Endothelial cell of umbilical vein (primary cell): ENCODE measurements at regions of chr17 and their contacts with region 1.

Region 1: DNA sequence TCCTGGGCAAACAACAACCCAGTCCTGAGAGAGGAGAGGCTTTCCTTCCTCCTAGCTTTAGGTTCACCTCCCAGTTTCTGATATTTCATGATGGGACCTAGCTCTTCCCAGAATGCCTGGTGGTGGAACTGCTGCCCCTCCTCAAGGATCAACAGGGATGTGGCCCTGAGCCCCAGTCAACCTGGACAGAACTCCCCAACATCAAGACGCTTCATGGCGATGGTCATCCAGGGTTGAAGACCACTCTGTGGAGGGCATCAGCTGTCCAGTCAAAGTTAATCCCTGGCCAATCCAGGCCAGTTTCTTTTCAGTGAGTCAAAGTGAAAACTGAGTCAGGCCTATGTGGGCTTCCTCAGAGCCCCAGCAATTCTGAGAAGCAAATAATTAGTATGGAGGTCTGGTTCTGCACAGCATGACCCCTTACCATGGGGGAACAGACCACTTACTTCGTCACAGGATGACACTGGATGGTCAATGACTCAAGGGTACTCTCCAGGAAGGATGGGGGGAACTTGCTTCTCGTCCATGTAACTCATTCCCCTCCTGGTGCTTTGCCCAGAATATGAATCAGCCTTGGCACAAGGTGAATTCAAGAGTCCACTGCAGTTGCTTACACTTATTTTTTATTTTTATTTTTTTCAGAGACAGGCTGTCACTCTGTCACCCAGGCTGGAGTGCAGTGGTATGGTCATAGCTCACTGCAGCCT is 14.7 kb upstream of the XYLT2 start:
- DNase-seq: no peak
- H3K4me3 ChIP-seq: no peak overlapping the region
- H3K27ac ChIP-seq: no peak overlapping the region
- H3K4me1 ChIP-seq: no peaks in the 10 kb centered on the region
- H3K27me3 ChIP-seq: peaks cover 9 to 11% of the 10 kb centered on the region in 2 experiments
- CTCF ChIP-seq: no peak
- POLR2A ChIP-seq: no peak

Region 2: GRCh38 chr17:50394711-50395110 is 63.5 kb after region 1 on chr17:
- CTCF ChIA-PET with region 1: no interaction called
- POLR2A ChIA-PET with region 1: no interaction called
- dilution Hi-C with region 1: no loop called
- intact Hi-C with region 1: no loop called
- DNase-seq: no peak
- H3K4me3 ChIP-seq: no peak overlapping the region
- H3K27ac ChIP-seq: no peak overlapping the region
- H3K4me1 ChIP-seq: peaks cover 21% of the 10 kb centered on the region
- H3K27me3 ChIP-seq: no peaks in the 10 kb centered on the region
- CTCF ChIP-seq: no peak
- POLR2A ChIP-seq: no peak

Region 3: DNA sequence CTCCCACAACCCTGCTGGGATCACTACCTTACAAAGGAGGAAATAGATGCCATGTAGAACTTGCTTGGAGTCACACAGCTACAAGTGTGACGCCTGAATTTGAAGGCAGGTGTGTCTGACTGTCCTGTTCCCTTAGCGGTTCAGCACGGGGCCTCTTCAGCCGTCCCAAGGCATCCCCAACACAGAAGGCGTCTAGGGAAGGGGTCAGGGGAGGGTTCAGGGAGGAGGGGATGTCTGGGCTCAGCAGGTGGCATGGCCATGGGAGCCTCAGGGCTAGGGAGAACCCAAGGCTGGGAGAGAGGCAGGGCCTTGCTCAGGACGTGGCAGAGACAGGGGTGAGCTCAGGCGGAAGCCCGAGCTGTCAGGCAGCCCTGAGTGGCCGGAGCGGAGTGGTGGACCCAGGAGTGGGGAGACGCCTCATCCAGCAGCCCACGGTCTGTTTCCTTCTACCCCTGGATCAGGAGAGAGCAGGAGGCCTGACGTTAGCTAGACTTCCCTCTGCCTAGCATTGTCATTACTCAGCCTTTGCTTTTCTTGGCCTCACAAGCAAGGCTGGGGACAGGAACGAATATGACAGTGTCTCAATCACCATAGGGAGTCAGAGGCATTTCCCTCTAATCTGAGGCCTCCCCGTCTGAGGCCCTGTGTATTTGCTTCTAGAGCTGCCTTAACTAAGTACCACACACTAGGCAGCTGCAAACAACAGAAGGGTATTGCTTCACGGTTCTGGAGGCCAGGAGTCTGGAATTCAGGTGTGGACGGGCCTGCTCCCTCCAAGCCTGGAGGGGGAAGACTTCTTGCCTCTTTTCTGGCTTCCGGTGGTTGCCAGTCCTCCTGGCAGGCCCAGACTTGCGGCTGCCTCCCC is 467.4 kb after region 1 on chr17:
- CTCF ChIA-PET with region 1: no interaction called
- POLR2A ChIA-PET with region 1: interaction called, 10 read pairs
- dilution Hi-C with region 1: no loop called
- intact Hi-C with region 1: no loop called
- DNase-seq: no peak
- H3K4me3 ChIP-seq: no peak overlapping the region
- H3K27ac ChIP-seq: no peak overlapping the region
- H3K4me1 ChIP-seq: no peaks in the 10 kb centered on the region
- H3K27me3 ChIP-seq: no peaks in the 10 kb centered on the region
- CTCF ChIP-seq: no peak
- POLR2A ChIP-seq: no peak